GM12878 (cell line): ENCODE measurements at regions of chr11 and their contacts with region 1.

Region 1: GRCh38 chr11:84564180-84564866 is 1062.8 kb downstream of the DLG2 start:
- DNase-seq: no peak
- ATAC-seq: peak; percentile 75
- H3K4me3 ChIP-seq: no peak overlapping the region
- H3K27ac ChIP-seq: no peak overlapping the region
- H3K4me1 ChIP-seq: no peaks in the 10 kb centered on the region
- H3K27me3 ChIP-seq: no peaks in the 10 kb centered on the region; a peak in 1 of 4 replicates
- CTCF ChIP-seq: peak; percentile 74 to 83 (median 78)
- EP300 ChIP-seq: no peak
- POLR2A ChIP-seq: no peak
- RAD21 ChIP-seq: peak; percentile 61

Region 2: GRCh38 chr11:83827940-83828554 is 736.3 kb before region 1 on chr11:
- CTCF ChIA-PET with region 1: interaction called, 12 read pairs
- POLR2A ChIA-PET with region 1: no interaction called
- RAD21 ChIA-PET with region 1: interaction called, 5 read pairs
- SMC1A ChIA-PET with region 1: no interaction called
- in situ Hi-C with region 1: loop called (anchors 10 kb)
- intact Hi-C with region 1: loop called (anchors 1 kb)
- DNase-seq: no peak
- ATAC-seq: peak; percentile 89
- H3K4me3 ChIP-seq: no peak overlapping the region
- H3K27ac ChIP-seq: no peak overlapping the region
- H3K4me1 ChIP-seq: no peaks in the 10 kb centered on the region
- H3K27me3 ChIP-seq: no peaks in the 10 kb centered on the region
- CTCF ChIP-seq: peak; percentile 47 to 64 (median 55); a peak in 5 of 6 replicates
- EP300 ChIP-seq: no peak
- POLR2A ChIP-seq: no peak
- RAD21 ChIP-seq: peak; percentile 64

Region 3: GRCh38 chr11:84261707-84262106 is 302.6 kb before region 1 on chr11:
- CTCF ChIA-PET with region 1: no interaction called
- POLR2A ChIA-PET with region 1: no interaction called
- RAD21 ChIA-PET with region 1: no interaction called
- SMC1A ChIA-PET with region 1: no interaction called
- in situ Hi-C with region 1: no loop called
- intact Hi-C with region 1: no loop called
- DNase-seq: no peak
- ATAC-seq: peak; percentile 78
- H3K4me3 ChIP-seq: no peak overlapping the region
- H3K27ac ChIP-seq: no peak overlapping the region
- H3K4me1 ChIP-seq: no peaks in the 10 kb centered on the region
- H3K27me3 ChIP-seq: no peaks in the 10 kb centered on the region; a peak in 1 of 4 replicates
- CTCF ChIP-seq: peak in 2 of 3 experiments; percentile 29 to 40; a peak in 4 of 6 replicates
- EP300 ChIP-seq: 0 out of 4 replicates have a peak, but pooled peaks of 1 of the 2 experiments have one; percentile 9
- POLR2A ChIP-seq: no peak
- RAD21 ChIP-seq: peak; percentile 66

Region 4: DNA sequence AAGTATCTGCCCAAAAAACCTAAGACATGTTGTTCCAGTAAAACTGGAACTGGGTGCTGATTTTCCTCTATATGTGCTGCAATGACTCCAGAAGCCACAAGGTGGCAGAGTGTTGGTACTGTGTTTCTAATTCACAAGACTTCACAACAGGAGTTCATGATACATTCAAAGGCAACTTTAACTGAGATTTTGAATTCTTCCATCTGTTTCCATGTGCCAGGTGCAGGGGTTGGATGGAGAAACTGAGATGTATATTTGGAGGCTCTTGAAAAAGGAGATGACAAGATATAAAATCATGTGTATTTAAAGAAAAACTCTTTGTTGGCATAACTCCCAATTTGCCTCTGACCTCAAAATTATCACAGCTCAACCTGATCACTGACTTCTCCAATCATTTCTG is 179.6 kb before region 1 on chr11:
- CTCF ChIA-PET with region 1: interaction called, 7 read pairs
- POLR2A ChIA-PET with region 1: no interaction called
- RAD21 ChIA-PET with region 1: no interaction called
- SMC1A ChIA-PET with region 1: interaction called, 3 read pairs
- in situ Hi-C with region 1: no loop called
- intact Hi-C with region 1: loop called (anchors 10 kb)
- DNase-seq: no peak
- ATAC-seq: peak; percentile 53; the same call in 2 of the 3 replicates
- H3K4me3 ChIP-seq: no peak overlapping the region
- H3K27ac ChIP-seq: no peak overlapping the region
- H3K4me1 ChIP-seq: no peaks in the 10 kb centered on the region
- H3K27me3 ChIP-seq: no peaks in the 10 kb centered on the region
- CTCF ChIP-seq: peak; percentile 68 to 77 (median 75)
- EP300 ChIP-seq: no peak
- POLR2A ChIP-seq: no peak
- RAD21 ChIP-seq: peak; percentile 67

Region 5: DNA sequence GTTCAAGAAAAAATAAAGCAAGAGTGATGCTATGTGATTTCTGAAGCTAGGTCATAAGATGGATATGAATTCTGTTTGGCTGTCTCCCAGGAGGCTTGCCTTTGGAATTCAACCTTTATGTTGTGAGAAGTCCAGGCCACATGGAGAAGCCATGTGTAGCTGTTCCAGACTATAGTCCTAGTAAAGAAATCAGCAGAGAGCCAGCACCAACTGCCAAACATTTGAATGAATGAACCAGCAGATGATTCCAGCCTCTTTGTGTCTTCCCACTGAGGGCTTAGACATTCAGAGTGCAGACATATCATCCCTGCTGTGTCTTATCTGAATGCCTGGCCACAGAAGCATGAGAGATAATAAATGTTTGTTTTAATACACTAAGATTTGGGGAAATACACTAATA is 87.7 kb before region 1 on chr11:
- CTCF ChIA-PET with region 1: no interaction called
- POLR2A ChIA-PET with region 1: no interaction called
- RAD21 ChIA-PET with region 1: no interaction called
- SMC1A ChIA-PET with region 1: no interaction called
- in situ Hi-C with region 1: no loop called
- intact Hi-C with region 1: no loop called
- DNase-seq: no peak
- ATAC-seq: no peak
- H3K4me3 ChIP-seq: no peak overlapping the region
- H3K27ac ChIP-seq: no peak overlapping the region
- H3K4me1 ChIP-seq: no peaks in the 10 kb centered on the region
- H3K27me3 ChIP-seq: no peaks in the 10 kb centered on the region
- CTCF ChIP-seq: no peak
- EP300 ChIP-seq: no peak
- POLR2A ChIP-seq: no peak
- RAD21 ChIP-seq: no peak

Region 6: DNA sequence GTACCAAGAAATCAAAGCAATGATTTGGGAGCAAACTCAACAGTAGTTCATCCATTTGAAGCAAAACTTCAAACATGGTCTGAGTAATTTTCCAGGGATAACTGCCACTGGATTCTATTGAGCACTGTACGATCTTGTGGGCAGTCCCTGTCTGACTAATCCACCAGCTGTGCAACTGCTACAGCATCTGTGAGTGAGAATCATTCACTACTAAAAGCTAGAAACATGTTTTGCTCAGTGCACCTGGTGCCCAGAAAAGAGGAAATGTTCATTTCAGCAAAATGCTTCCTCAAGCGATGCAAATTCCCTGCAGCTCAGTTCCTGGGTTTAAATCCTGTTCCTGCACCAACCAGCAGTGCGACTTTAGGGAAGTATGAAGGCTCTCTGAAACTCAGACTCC is 15.1 kb before region 1 on chr11:
- CTCF ChIA-PET with region 1: interaction called, 13 read pairs
- POLR2A ChIA-PET with region 1: no interaction called
- RAD21 ChIA-PET with region 1: no interaction called
- SMC1A ChIA-PET with region 1: interaction called, 5 read pairs
- in situ Hi-C with region 1: no loop called
- intact Hi-C with region 1: no loop called
- DNase-seq: no peak
- ATAC-seq: no peak; the same call in 2 of the 3 replicates
- H3K4me3 ChIP-seq: no peak overlapping the region
- H3K27ac ChIP-seq: no peak overlapping the region
- H3K4me1 ChIP-seq: no peaks in the 10 kb centered on the region
- H3K27me3 ChIP-seq: no peaks in the 10 kb centered on the region
- CTCF ChIP-seq: no peak
- EP300 ChIP-seq: no peak
- POLR2A ChIP-seq: no peak
- RAD21 ChIP-seq: no peak

Region 7: GRCh38 chr11:85589373-85589772 is 1025.0 kb after region 1 on chr11:
- CTCF ChIA-PET with region 1: interaction called, 17 read pairs
- POLR2A ChIA-PET with region 1: no interaction called
- RAD21 ChIA-PET with region 1: interaction called, 4 read pairs
- SMC1A ChIA-PET with region 1: interaction called, 14 read pairs
- in situ Hi-C with region 1: loop called (anchors 10 kb)
- intact Hi-C with region 1: loop called (anchors 2 kb)
- DNase-seq: no peak
- ATAC-seq: no peak
- H3K4me3 ChIP-seq: no peak overlapping the region
- H3K27ac ChIP-seq: no peak overlapping the region
- H3K4me1 ChIP-seq: no peaks in the 10 kb centered on the region
- H3K27me3 ChIP-seq: no peaks in the 10 kb centered on the region
- CTCF ChIP-seq: no peak
- EP300 ChIP-seq: no peak
- POLR2A ChIP-seq: no peak
- RAD21 ChIP-seq: no peak